Left colon (tissue), 2 donors: ENCODE measurements at regions of chr10 and their contacts with region 1.

Region 1: DNA sequence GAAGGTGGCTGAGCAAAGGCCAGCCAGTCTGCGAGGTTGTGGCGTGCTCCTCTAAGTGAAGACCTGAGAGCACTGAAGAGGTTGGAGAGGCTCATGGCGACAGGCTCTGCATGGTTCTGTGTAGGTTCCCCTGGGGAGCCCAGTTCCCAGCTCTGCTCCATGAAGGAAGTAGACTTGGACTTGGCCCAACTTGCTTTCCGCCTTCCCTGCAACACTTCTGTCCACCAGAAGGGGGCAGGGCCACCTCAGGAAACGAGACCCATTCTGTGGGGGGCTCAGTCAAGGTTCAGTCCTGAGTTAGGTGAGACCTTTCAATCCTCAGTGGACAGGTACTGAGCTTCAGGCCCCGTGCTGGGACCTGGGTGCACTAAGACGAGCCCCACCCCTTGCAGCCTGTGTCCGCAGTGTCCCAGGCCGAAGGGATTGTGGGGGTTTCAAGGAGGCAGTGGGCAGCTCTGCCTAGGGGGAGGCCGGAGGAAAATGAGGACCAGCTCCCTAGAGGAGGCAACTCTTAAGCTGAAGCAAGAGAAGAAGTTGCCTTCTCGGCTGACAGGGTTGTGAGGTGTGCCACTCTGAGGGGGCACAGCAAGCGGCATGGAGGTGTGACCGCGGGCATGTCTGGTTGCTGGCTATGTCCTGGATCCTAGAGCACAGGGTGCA is 15.0 kb upstream of the PCBD1 start:
- DNase-seq: peak in 1 of 2 donors; percentile 49
- ATAC-seq: peak; percentile 53

Region 2: DNA sequence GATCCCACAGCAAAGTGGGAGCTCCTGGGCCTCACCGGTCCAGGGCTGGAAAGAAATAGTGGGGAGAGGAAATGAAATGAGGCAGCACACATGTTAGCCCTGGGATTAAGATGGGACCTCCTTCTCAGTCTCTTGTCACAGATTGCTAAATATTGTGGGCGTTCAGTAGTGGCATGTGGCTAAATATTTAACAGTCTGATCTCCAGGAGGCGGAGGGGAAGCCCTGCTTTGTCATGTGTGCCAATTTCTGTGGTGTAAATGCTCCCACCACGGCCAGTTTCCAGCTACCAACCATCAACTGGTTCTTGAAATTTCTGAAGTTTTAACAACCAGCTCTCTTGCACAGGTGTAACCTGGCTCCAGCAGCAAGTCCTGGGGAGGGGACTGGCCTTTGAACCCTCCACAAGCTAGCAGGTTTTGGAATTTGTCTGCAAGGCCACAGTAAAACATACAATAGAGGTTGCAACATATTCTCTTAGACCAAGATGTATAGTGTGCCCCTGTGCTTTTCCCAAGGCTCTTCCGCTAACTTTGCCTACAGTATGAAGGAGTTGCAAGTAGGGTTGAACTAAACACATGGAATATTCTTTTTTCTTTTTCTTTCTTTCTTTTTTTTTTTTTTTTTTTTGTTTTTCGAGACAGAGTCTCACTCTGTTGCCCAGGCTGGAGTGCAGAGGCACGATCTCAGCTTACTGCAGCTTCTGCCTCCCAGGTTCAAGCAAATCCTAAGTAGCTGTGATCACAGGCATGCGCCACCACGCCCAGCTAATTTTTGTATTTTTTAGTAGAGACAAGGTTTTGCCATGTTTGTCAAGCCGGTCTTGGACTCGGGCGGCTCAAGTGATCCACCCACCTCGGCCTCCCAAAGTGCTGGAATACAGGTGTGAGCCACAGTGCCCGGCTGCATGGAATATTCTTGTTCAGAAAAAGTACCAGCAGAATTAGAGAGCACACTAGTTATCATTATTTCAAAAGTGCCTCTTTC is 88.0 kb after region 1 on chr10:
- intact Hi-C with region 1: no loop called
- DNase-seq: no peak
- ATAC-seq: no peak

Region 3: GRCh38 chr10:71285180-71285545 is 381.8 kb after region 1 on chr10:
- intact Hi-C with region 1: loop called in 1 of 2 experiments (anchors 5 kb)
- DNase-seq: peak in 1 of 2 donors; percentile 48
- ATAC-seq: peak; percentile 76